Activated CD4-positive, alpha-beta memory T cell treated with anti-CD3 and anti-CD28 coated beads, Interleukin-2, amount 10 ng/mL, durations not matched to agents 7 days and 5 days (primary cell): ENCODE measurements at regions of chr11 and their contacts with region 1.

Region 1: DNA sequence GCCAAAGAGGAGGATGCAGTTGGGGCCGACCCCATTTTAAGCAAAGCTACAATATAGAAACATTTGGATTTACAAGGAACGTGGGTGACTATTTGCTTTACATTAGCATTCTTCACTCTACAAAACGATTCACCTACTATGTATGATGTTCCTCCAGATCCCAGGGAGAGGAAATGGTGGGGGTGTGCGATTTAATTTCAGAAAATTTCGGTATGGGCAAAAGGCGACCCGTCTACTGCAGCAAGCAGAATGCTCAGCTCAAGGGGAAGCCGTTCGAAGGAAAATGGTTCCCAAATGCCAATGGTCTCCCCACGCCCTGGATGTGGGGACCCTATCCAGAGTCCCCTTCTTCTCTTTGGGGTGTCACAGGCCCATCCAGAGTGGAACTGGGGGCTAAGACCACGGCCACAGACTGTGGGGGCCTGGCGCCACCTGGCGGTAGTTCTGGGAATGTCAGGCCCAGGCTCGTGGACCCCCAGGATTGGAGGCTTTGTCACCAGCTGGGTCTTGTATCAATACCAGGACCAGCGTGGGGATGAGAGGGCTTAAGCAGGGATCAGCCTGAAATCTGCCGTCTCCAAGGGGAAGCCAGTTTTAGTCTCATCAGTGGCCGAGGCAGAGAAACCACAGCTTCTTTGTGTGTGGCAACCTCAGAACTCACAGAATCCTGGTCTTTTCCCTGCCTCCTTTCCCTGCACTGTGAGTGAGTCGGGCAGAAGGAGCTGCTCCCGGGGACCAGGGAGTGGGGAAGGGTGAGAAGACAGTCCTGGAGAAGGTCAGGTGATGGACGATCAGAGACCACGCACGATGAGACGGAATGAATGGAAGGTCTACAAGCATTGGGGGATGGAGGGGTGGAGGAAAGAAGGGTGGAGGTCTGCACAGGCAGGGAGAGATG is 8.4 kb downstream of the LRRC10B start:
- DNase-seq: peak; percentile 51
- H3K4me3 Mint-ChIP-seq: no peak overlapping the region
- H3K27ac Mint-ChIP-seq: no peak overlapping the region
- H3K4me1 Mint-ChIP-seq: peaks cover 2% of the 10 kb centered on the region
- H3K27me3 Mint-ChIP-seq: peaks cover 4% of the 10 kb centered on the region

Region 2: DNA sequence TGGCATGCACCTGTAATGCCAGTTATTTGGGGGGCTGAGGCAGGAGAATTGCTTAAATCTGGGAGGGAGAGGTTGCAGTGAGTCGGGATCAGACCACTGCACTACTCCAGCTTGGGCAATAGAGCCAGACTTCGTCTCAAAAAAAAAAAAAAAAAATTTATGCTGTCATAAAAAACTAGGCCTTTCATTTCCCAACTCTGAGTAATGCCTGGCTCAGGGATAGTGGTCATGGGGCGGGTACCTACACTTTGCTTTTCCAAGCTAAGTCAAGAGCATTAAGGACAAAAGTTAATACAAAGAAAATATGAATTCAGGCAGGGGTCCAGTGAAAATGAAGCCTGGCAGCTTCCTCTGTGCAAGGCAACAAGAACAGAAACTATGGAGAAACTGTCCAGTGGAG is 103.4 kb before region 1 on chr11:
- CTCF ChIA-PET with region 1: no interaction called
- POLR2A ChIA-PET with region 1: no interaction called
- DNase-seq: no peak
- H3K4me3 Mint-ChIP-seq: no peak overlapping the region
- H3K27ac Mint-ChIP-seq: peak overlapping the region; percentile 60
- H3K4me1 Mint-ChIP-seq: peaks cover 43% of the 10 kb centered on the region
- H3K27me3 Mint-ChIP-seq: no peaks in the 10 kb centered on the region

Region 3: GRCh38 chr11:61477727-61478148 is 39.2 kb before region 1 on chr11:
- CTCF ChIA-PET with region 1: interaction called, 52 read pairs
- POLR2A ChIA-PET with region 1: no interaction called
- DNase-seq: peak; percentile 51
- H3K4me3 Mint-ChIP-seq: no peak overlapping the region
- H3K27ac Mint-ChIP-seq: no peak overlapping the region
- H3K4me1 Mint-ChIP-seq: peaks cover 3% of the 10 kb centered on the region
- H3K27me3 Mint-ChIP-seq: no peaks in the 10 kb centered on the region

Region 4: GRCh38 chr11:61526956-61527731 is 10.2 kb after region 1 on chr11:
- CTCF ChIA-PET with region 1: interaction called, 18 read pairs
- POLR2A ChIA-PET with region 1: no interaction called
- DNase-seq: no peak
- H3K4me3 Mint-ChIP-seq: no peak overlapping the region
- H3K27ac Mint-ChIP-seq: no peak overlapping the region
- H3K4me1 Mint-ChIP-seq: no peaks in the 10 kb centered on the region
- H3K27me3 Mint-ChIP-seq: peaks cover 22% of the 10 kb centered on the region

Region 5: GRCh38 chr11:61532139-61533038 is 15.5 kb after region 1 on chr11:
- CTCF ChIA-PET with region 1: interaction called, 10 read pairs
- POLR2A ChIA-PET with region 1: no interaction called
- DNase-seq: peak; percentile 51
- H3K4me3 Mint-ChIP-seq: no peak overlapping the region
- H3K27ac Mint-ChIP-seq: no peak overlapping the region
- H3K4me1 Mint-ChIP-seq: no peaks in the 10 kb centered on the region
- H3K27me3 Mint-ChIP-seq: peaks cover 3% of the 10 kb centered on the region